ENCODE measurements at regions of chr15 and their contacts with region 1.

Region 1: DNA sequence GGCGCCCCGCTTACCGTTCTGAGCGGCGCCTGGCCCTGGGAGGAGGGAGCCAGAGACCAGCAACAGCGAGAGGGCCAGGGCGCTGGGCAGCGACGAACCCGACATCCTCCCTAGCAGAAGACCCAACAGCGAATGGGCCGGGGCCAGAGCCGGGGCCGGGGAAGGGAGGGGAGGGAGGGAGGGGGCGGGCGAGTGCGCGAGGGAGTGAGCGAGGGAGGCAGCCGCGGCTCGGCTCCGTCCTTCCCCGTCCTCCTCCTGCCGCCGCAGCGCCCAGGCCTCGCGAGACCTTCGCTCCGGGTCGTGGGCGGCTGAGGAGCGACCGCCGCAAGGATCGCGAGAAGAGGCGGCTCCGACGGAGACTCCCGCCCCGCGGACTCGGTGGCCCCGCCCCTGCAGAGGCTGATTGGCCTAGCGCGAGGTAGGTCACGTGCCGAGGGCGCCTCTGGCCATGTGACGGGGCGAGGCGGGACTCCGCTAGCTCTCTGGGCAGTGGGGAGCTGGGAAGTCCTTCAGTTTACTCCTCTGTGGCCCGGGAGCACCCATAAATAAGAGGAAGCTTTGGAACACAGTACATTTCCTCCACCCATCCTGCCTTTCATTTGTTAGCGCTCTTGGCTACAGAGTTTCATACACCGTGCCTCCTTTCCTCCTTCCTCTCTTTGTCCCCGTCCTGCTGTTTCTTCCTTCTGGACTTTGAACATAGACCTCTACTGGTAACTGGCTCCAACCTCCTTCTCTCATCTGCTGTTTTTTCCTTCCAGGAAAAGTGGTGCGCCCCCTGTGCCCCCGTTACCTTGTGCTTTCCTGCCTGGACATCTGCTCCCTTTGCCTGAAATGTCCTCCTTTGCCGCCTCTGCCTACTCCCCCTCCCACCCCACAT is at the start of gene NPTN:
- DNase-seq: peak; percentile 98
- H3K4me3 Mint-ChIP-seq: peak within 1 kb of the TSS; percentile 81
- H3K27ac Mint-ChIP-seq: peak within 1 kb of the TSS; percentile 81
- H3K4me1 Mint-ChIP-seq: peaks cover 40% of the 10 kb centered on the region
- H3K27me3 Mint-ChIP-seq: peaks cover 17% of the 10 kb centered on the region
- total RNA-seq, gene NPTN: 69.3 and 76.6 TPM in 2 replicates

Region 2: DNA sequence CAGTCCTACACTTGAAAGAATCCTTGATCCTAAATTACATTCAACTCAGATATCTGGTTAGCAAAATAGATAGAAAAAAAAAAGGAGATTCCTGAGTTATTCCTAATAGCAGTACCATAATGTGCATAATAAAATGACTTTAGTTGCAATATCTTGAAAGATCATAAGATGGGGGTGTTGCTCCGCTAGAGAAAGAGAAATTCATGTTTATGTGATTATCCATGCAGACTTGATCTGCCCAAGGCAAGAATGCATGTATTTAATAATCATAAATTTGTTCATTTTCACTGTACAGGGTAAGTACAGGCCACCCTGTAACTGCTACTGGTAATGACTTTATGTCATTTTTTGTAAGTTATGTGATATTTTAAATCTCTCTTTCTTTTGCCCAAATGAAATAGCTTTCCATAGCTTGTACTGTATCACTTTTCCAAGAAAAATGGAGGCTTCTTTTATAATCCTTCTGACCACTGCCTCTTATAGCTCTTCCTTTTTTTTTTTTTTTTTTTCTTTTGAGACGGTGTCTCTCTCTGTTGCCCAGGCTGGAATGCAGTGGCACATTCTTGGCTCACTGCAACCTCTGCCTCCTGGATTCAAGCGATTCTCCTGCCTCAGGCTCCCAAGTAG is 349.1 kb before region 1 on chr15:
- intact Hi-C with region 1: loop called (anchors 1 kb)
- DNase-seq: no peak
- H3K4me3 Mint-ChIP-seq: no peak overlapping the region
- H3K27ac Mint-ChIP-seq: no peak overlapping the region
- H3K4me1 Mint-ChIP-seq: peaks cover 21% of the 10 kb centered on the region
- H3K27me3 Mint-ChIP-seq: no peaks in the 10 kb centered on the region

Region 3: GRCh38 chr15:73305331-73306211 is 327.8 kb before region 1 on chr15:
- intact Hi-C with region 1: loop called (anchors 5 kb)
- DNase-seq: no peak
- H3K4me3 Mint-ChIP-seq: no peak overlapping the region
- H3K27ac Mint-ChIP-seq: no peak overlapping the region
- H3K4me1 Mint-ChIP-seq: peaks cover 17% of the 10 kb centered on the region
- H3K27me3 Mint-ChIP-seq: peaks cover 3% of the 10 kb centered on the region

Region 4: DNA sequence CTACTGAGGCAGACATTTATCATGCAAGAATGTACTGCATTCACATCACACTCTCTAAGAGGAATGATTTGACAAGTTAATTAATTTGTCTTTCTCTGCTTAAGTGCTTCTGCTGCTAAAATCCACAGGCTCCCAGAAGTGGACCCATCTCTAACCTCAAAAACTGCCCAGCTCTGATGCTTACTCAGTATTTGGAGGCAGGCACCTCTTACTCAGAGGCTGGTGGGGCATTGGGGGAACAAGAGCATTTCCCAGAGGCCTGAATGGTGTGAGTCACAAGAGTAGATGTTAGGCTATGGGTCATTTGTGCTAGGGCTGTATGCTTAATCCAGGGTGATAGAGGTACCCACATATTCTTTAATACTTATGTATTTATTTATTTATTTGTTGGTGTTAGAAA is 230.2 kb before region 1 on chr15:
- intact Hi-C with region 1: no loop called
- DNase-seq: no peak
- H3K4me3 Mint-ChIP-seq: no peak overlapping the region
- H3K27ac Mint-ChIP-seq: no peak overlapping the region
- H3K4me1 Mint-ChIP-seq: no peaks in the 10 kb centered on the region
- H3K27me3 Mint-ChIP-seq: peaks cover 2% of the 10 kb centered on the region

Region 5: GRCh38 chr15:73560501-73561117 is 72.7 kb before region 1 on chr15:
- intact Hi-C with region 1: loop called (anchors 1 kb)
- DNase-seq: no peak
- H3K4me3 Mint-ChIP-seq: no peak overlapping the region
- H3K27ac Mint-ChIP-seq: no peak overlapping the region
- H3K4me1 Mint-ChIP-seq: peaks cover 8% of the 10 kb centered on the region
- H3K27me3 Mint-ChIP-seq: no peaks in the 10 kb centered on the region

Region 6: GRCh38 chr15:73593304-73594074 is 39.9 kb before region 1 on chr15:
- intact Hi-C with region 1: no loop called
- DNase-seq: no peak
- H3K4me3 Mint-ChIP-seq: no peak overlapping the region
- H3K27ac Mint-ChIP-seq: peak overlapping the region; percentile 26
- H3K4me1 Mint-ChIP-seq: peaks cover 10% of the 10 kb centered on the region
- H3K27me3 Mint-ChIP-seq: no peaks in the 10 kb centered on the region

Region 7: GRCh38 chr15:73683777-73684580 is 50.6 kb after region 1 on chr15 and contains the start of gene CD276:
- intact Hi-C with region 1: loop called (anchors 5 kb)
- DNase-seq: no peak
- H3K4me3 Mint-ChIP-seq: peak within 1 kb of the TSS; percentile 85
- H3K27ac Mint-ChIP-seq: peak within 1 kb of the TSS; percentile 62
- H3K4me1 Mint-ChIP-seq: peaks cover 27% of the 10 kb centered on the region
- H3K27me3 Mint-ChIP-seq: peaks cover 44% of the 10 kb centered on the region
- total RNA-seq, gene CD276: 16.7 and 17.0 TPM in 2 replicates

Region 8: DNA sequence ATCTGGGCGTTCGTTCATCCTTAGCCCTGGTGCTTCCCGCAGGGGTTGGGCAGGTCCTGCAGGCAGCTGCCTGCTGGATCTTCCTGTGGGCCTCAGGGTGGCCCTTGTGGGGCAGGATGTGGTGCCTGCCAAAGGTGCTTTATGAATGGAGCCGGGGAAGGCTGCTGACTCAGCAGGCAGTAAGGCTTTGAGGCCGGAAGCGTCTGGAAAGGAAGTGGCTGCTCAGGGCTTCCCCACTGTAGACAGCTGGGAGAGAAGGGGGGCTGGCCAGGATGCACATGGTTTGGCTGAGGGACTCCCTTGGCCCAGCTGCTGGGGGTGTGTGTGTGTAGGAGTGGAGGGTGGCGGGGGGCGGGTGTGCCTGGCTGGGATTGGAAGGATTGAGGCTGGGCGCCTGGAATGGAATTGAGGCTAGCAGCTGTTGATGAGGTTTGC is 63.7 kb after region 1 on chr15:
- intact Hi-C with region 1: loop called (anchors 1 kb)
- DNase-seq: peak; percentile 79
- H3K4me3 Mint-ChIP-seq: peak overlapping the region; percentile 26
- H3K27ac Mint-ChIP-seq: peak overlapping the region; percentile 21
- H3K4me1 Mint-ChIP-seq: peaks cover 39% of the 10 kb centered on the region
- H3K27me3 Mint-ChIP-seq: peaks cover 43% of the 10 kb centered on the region

Measured in activated T-helper 2 cell treated with anti-CD3 and anti-CD28 coated beads, Interferon-gamma antibody, Interleukin-2, Interleukin-4, amounts not matched to agents 10 μg/mL and 5 μg/mL and 100 μg/mL, durations not matched to agents 14 hours and 24 hours and 36 hours (primary cell).